ENCODE measurements at regions of chr14 and their contacts with region 1.

Region 1: GRCh38 chr14:56579345-56580220 is at the start of gene TMEM260:
- DNase-seq: peak; percentile 93
- H3K4me3 Mint-ChIP-seq: peak within 1 kb of the TSS; percentile 78
- H3K27ac Mint-ChIP-seq: peak within 1 kb of the TSS; percentile 70
- H3K4me1 Mint-ChIP-seq: peaks cover 31% of the 10 kb centered on the region
- H3K27me3 Mint-ChIP-seq: no peaks in the 10 kb centered on the region
- CTCF ChIP-seq: peak; percentile 78
- total RNA-seq, gene TMEM260: 18.3 and 24.1 TPM in 2 replicates

Region 2: GRCh38 chr14:56524971-56525677 is 54.5 kb before region 1 on chr14:
- CTCF ChIA-PET with region 1: no interaction called
- intact Hi-C with region 1: no loop called
- DNase-seq: no peak
- H3K4me3 Mint-ChIP-seq: no peak overlapping the region
- H3K27ac Mint-ChIP-seq: no peak overlapping the region
- H3K4me1 Mint-ChIP-seq: no peaks in the 10 kb centered on the region
- H3K27me3 Mint-ChIP-seq: peaks cover 53% of the 10 kb centered on the region
- CTCF ChIP-seq: no peak

Region 3: DNA sequence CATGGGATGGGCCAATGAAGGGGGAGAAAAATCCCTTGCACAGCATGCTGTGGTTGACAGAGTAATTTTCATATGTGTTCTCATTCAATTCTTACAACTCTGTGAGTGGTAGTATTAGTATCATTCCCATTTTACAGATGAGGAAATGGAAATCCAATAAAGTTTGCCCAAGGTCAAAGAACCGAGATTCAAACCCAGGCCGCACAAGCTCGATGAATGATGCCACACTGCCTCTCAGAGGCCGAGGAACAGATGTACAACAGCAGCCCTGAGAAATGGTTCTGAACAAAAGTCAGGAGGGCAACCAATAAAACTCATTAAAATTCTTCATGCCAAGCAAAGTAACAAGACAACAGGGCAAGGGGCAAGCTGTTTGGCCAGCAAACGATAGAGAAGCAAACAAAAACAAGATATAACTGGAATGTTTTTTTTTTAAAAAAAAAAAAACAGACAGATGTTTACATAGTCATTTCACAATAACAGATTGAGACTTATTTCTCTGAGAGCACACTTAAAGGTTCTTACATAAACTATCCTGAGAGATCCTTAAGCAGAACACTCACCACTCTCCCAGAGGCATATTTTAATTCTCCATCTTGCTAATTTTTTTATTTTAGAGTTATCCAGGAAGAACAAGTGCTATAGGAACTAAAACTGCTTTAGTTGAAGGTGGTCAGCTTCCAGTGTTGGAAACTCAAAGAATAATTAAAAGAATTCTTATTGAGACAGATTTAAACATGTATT is 603.3 kb after region 1 on chr14:
- CTCF ChIA-PET with region 1: no interaction called
- intact Hi-C with region 1: loop called (anchors 10 kb)
- DNase-seq: peak; percentile 13
- H3K4me3 Mint-ChIP-seq: no peak overlapping the region
- H3K27ac Mint-ChIP-seq: no peak overlapping the region
- H3K4me1 Mint-ChIP-seq: no peaks in the 10 kb centered on the region
- H3K27me3 Mint-ChIP-seq: peaks cover 86% of the 10 kb centered on the region
- CTCF ChIP-seq: no peak

Measured in Calu3 (cell line).